ENCODE measurements at regions of chrX and their contacts with region 1.

Region 1: GRCh38 chrX:11758400-11759171 is 549 bp downstream of the MSL3 start:
- DNase-seq: peak; percentile 96
- H3K4me3 Mint-ChIP-seq: peak overlapping the region; percentile 95
- H3K27ac Mint-ChIP-seq: peak overlapping the region; percentile 99
- H3K4me1 Mint-ChIP-seq: peaks cover 22% of the 10 kb centered on the region
- H3K27me3 Mint-ChIP-seq: peaks cover 25% of the 10 kb centered on the region

Region 2: GRCh38 chrX:11111038-11111851 is 647.3 kb before region 1 on chrX and contains the start of gene HCCS:
- intact Hi-C with region 1: loop called (anchors 5 kb)
- DNase-seq: peak; percentile 95
- H3K4me3 Mint-ChIP-seq: peak within 1 kb of the TSS; percentile 92
- H3K27ac Mint-ChIP-seq: peak within 1 kb of the TSS; percentile 93
- H3K4me1 Mint-ChIP-seq: peaks cover 18% of the 10 kb centered on the region
- H3K27me3 Mint-ChIP-seq: no peaks in the 10 kb centered on the region
- total RNA-seq, gene HCCS: 26.0 and 27.2 TPM in 2 replicates

Region 3: GRCh38 chrX:11629593-11630211 is 128.9 kb before region 1 on chrX:
- intact Hi-C with region 1: no loop called
- DNase-seq: no peak
- H3K4me3 Mint-ChIP-seq: no peak overlapping the region
- H3K27ac Mint-ChIP-seq: no peak overlapping the region
- H3K4me1 Mint-ChIP-seq: no peaks in the 10 kb centered on the region
- H3K27me3 Mint-ChIP-seq: peaks cover 2% of the 10 kb centered on the region

Region 4: DNA sequence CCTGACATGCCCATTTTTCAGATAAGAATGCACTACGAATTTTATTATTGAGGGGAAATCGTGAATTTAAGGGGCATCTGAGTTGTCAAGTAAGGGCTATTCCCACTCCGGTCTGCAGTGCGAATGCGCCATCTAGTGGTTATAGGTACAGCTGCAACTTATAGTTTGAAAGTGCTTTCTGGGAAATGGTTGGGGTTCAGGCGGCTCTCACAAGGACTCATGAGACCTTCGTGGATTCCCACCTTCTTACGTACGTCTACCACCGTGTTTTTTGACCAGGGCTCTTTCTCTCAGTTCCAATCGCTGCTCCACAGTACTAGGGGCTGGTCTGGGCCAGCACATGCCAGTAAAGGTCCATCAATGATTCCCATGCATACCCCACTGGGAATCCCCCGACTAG is 11.7 kb after region 1 on chrX:
- intact Hi-C with region 1: loop called (anchors 1 kb)
- DNase-seq: peak; percentile 82
- H3K4me3 Mint-ChIP-seq: peak overlapping the region; percentile 52
- H3K27ac Mint-ChIP-seq: peak overlapping the region; percentile 84
- H3K4me1 Mint-ChIP-seq: peaks cover 23% of the 10 kb centered on the region
- H3K27me3 Mint-ChIP-seq: no peaks in the 10 kb centered on the region

Region 5: GRCh38 chrX:11792461-11793421 is 34.2 kb after region 1 on chrX:
- intact Hi-C with region 1: loop called (anchors 2 kb)
- DNase-seq: peak; percentile 84
- H3K4me3 Mint-ChIP-seq: peak overlapping the region; percentile 55
- H3K27ac Mint-ChIP-seq: peak overlapping the region; percentile 91
- H3K4me1 Mint-ChIP-seq: peaks cover 15% of the 10 kb centered on the region
- H3K27me3 Mint-ChIP-seq: no peaks in the 10 kb centered on the region

Region 6: GRCh38 chrX:12771445-12772069 is 1013.0 kb after region 1 on chrX:
- intact Hi-C with region 1: loop called (anchors 10 kb)
- DNase-seq: peak; percentile 91
- H3K4me3 Mint-ChIP-seq: peak overlapping the region; percentile 55
- H3K27ac Mint-ChIP-seq: no peak overlapping the region
- H3K4me1 Mint-ChIP-seq: peaks cover 7% of the 10 kb centered on the region
- H3K27me3 Mint-ChIP-seq: peaks cover 35% of the 10 kb centered on the region